Activated naive CD4-positive, alpha-beta T cell treated with anti-CD3 and anti-CD28 coated beads for 36 hours (primary cell): ENCODE measurements at regions of chr3 and their contacts with region 1.

Region 1: DNA sequence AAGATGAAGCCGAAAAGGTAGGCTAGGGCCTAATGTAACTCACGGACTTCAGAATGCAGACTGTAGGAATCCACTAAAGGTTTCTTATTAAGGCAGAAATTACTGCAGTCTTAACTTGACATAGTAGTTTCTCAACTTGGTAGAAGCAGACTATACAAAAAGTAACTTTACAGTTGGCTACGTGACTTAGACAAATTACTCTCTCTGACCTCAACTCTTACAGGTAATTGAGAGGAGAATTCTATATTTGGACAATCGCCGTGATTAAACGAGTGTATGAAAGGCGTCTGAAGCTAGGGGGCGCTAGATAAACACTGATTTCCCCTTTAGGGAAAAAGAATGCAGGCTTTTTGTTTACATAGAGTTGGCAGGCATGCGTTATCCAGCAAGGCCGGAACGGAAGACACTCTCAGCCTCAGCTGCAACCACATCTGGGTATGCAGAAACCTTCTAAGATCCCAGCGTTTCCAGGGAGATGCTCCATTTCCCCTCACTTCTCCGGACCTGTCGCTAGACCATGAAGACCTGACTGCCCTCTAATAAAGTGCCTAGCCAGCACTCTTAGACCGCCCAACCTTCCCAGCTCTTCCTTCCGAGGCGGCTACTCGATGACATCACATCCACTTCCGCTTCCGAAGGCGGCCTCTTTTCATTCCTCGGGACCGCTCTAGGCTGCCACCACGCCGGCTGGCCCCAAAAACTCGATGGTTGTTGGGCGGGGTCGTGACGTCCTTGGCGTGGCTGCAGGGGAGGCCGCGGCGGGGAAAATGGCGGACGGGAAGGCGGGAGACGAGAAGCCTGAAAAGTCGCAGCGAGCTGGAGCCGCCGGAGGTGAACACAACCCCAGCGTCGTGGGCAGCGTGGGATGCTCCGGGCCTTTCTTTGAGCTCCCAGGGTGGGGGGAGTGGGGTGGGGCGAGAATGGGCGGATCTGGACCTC is at the start of gene PCNP:
- DNase-seq: peak; percentile 100
- H3K4me3 Mint-ChIP-seq: peak within 1 kb of the TSS; percentile 95
- H3K27ac Mint-ChIP-seq: peak within 1 kb of the TSS; percentile 96
- H3K4me1 Mint-ChIP-seq: peaks cover 67% of the 10 kb centered on the region
- H3K27me3 Mint-ChIP-seq: no peaks in the 10 kb centered on the region
- total RNA-seq, gene PCNP: 261 to 267 TPM

Region 2: GRCh38 chr3:100334488-100335351 is 1239.0 kb before region 1 on chr3 and contains the start of gene NIT2:
- CTCF ChIA-PET with region 1: no interaction called
- intact Hi-C with region 1: loop called (anchors 10 kb)
- DNase-seq: peak; percentile 82
- H3K4me3 Mint-ChIP-seq: peak within 1 kb of the TSS; percentile 86
- H3K27ac Mint-ChIP-seq: peak within 1 kb of the TSS; percentile 86
- H3K4me1 Mint-ChIP-seq: peaks cover 26% of the 10 kb centered on the region
- H3K27me3 Mint-ChIP-seq: no peaks in the 10 kb centered on the region
- total RNA-seq, gene NIT2: 69.1 to 76.0 TPM

Region 3: DNA sequence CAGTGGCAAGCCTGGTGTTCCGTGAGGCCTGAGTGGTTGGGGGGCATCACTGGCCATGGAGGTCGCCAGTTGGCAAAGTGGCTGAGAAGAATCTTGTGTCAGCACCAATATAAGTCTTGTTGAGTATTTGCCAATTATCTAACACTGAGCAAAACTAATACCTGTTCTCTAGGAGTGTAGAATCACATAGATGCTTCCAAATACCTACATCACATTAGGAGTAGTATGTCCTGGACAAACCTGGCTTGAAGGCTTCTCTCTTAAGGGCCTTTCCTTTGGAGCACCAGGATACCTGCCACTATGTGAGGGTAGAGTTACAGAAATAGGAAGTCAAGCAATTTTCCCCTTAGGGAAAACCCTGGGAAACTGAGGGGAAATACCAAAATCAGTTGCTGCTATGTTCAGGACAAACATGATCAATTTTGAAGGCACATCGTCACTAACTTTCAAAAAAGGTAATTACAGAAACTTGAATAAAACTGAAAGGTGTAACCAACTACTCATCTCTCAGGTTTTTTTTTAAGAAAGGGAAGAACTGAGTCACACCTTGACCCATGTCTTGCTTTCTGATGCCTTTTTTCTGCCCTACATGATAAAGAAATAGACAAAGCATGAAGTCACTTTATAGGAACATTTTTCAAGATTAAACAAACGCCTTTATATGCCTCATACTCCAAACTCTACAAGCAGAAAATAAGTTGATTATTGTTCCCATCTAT is 353.7 kb before region 1 on chr3:
- CTCF ChIA-PET with region 1: no interaction called
- intact Hi-C with region 1: loop called (anchors 1 kb)
- DNase-seq: peak; percentile 8
- H3K4me3 Mint-ChIP-seq: no peak overlapping the region
- H3K27ac Mint-ChIP-seq: peak overlapping the region; percentile 61
- H3K4me1 Mint-ChIP-seq: peaks cover 16% of the 10 kb centered on the region
- H3K27me3 Mint-ChIP-seq: no peaks in the 10 kb centered on the region

Region 4: DNA sequence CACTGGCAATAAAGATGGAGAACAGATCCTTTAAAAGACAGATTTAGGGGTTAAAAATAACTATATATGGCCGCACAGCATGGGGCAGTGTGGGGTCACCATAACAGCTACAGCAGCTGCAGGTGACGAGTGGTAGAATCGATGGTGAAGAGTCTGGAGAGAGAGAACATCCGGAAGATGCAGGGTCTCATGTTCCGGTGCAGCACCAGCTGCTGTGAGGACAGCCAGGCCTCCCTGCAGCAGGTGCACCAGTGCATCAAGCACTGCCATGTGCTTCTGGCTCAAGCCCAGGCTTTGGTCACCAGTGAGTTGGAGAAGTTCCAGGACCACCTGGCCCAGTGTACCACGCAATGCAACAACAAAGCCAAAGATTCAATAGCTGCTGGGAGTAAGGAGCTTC is 159.6 kb before region 1 on chr3:
- CTCF ChIA-PET with region 1: no interaction called
- intact Hi-C with region 1: no loop called
- DNase-seq: no peak
- H3K4me3 Mint-ChIP-seq: no peak overlapping the region
- H3K27ac Mint-ChIP-seq: no peak overlapping the region
- H3K4me1 Mint-ChIP-seq: peaks cover 34% of the 10 kb centered on the region
- H3K27me3 Mint-ChIP-seq: no peaks in the 10 kb centered on the region

Region 5: DNA sequence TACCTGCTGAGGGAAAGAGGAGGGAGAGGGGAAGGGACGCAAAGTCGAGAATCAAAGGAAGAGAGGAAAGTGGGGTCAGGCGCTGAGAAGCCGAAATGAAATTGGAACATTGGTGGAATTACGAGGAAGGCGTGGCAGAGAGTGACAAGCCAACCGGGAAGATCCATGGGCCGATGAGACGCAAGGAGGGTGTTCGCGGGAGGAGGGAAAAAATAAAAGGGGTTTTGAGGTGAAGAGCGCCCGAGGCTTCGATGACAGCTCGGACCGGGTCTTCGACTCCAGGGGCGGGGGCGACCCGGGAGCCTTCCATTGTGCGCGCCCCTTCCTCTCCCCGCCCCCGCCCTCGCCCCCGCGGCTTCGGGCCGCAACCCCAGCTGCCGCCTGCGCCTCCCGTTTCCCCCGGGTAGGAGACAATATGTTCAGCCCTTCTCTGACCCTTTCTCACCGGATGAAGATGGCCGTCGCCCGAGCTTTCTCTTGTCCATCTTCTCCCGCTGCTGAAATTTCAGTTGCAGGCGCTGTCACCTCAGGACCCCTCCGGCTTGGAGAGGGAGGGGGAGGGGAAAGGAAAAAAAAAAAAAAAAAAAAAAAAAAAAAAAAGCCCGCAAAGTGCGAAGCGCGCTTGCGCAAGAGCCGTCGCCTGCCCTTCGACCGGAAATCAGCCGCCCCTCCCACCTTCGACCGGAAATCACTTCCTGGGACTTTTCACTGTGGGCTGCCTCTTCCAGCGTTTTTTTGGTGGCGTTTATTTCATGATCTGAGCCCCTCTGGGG is 60.9 kb before region 1 on chr3 and contains the start of gene SENP7:
- CTCF ChIA-PET with region 1: interaction called, 3 read pairs
- intact Hi-C with region 1: loop called (anchors 1 kb)
- DNase-seq: peak; percentile 89
- H3K4me3 Mint-ChIP-seq: peak within 1 kb of the TSS; percentile 97
- H3K27ac Mint-ChIP-seq: peak within 1 kb of the TSS; percentile 97
- H3K4me1 Mint-ChIP-seq: peaks cover 50% of the 10 kb centered on the region
- H3K27me3 Mint-ChIP-seq: no peaks in the 10 kb centered on the region
- total RNA-seq, gene SENP7: 16.1 to 16.8 TPM

Region 6: GRCh38 chr3:101561630-101562328 is 11.9 kb before region 1 on chr3 and contains the start of gene TRMT10C:
- CTCF ChIA-PET with region 1: interaction called, 3 read pairs
- intact Hi-C with region 1: loop called (anchors 1 kb)
- DNase-seq: peak; percentile 96
- H3K4me3 Mint-ChIP-seq: peak within 1 kb of the TSS; percentile 97
- H3K27ac Mint-ChIP-seq: peak within 1 kb of the TSS; percentile 94
- H3K4me1 Mint-ChIP-seq: peaks cover 40% of the 10 kb centered on the region
- H3K27me3 Mint-ChIP-seq: no peaks in the 10 kb centered on the region
- total RNA-seq, gene TRMT10C: 24.0 to 24.4 TPM

Region 7: GRCh38 chr3:101602731-101603130 is 29.0 kb after region 1 on chr3:
- CTCF ChIA-PET with region 1: no interaction called
- intact Hi-C with region 1: no loop called
- DNase-seq: no peak
- H3K4me3 Mint-ChIP-seq: no peak overlapping the region
- H3K27ac Mint-ChIP-seq: no peak overlapping the region
- H3K4me1 Mint-ChIP-seq: peaks cover 2% of the 10 kb centered on the region
- H3K27me3 Mint-ChIP-seq: no peaks in the 10 kb centered on the region

Region 8: DNA sequence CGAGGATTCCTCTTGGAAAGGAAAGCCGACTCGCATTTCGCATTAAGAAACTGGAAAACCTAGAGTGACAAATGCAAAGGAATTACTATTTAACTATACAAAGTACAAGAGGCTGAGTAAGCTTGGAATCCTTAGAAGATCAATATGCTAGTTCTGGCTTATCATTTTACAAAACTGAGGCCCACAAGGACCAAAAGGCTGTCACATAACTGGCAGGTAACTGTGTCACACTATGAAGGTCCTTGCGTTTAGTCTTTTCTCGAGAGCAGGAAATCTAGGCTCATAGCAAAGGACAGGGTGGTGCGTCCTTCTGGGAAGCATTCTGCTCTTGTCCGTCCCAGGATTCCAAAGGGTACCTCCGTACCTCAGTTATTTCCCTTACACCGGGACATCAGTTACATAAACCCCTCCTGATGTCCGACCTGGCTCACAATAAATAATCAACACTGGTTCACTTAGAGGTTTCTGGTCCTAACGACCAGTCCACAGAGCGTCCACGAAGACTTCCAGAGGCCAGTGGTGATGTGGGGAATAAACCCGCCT is 112.2 kb after region 1 on chr3:
- CTCF ChIA-PET with region 1: interaction called, 4 read pairs
- intact Hi-C with region 1: loop called (anchors 1 kb)
- DNase-seq: no peak
- H3K4me3 Mint-ChIP-seq: peak overlapping the region; percentile 98
- H3K27ac Mint-ChIP-seq: peak overlapping the region; percentile 99
- H3K4me1 Mint-ChIP-seq: peaks cover 54% of the 10 kb centered on the region
- H3K27me3 Mint-ChIP-seq: no peaks in the 10 kb centered on the region

Region 9: DNA sequence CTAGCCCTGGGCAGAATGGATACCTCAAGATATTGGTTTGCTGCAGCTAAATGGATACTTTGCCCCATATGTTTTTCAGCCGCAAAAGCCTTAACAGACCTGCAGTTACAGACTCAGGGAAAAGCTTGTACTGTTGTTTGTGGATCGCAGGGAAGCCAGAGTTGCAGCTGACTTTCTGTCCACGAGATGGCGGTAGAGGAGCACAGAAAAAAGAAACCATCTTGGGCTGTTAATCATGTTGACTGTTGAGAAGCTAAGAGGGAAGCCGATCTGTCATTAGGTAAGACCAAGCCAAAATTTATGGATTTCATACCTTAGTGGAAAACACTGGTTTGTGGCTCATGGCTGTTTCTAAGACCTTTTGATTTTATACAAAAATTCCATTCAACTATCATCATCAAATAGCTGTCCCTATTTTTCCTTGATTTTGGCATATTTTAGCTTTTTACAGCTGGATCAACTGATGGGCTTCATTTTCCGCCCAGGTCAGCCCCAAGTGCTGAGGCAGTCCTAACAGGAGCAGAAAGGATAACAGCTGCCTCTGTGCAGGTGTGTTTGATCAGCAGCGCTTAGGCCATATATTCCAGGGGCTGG is 655.4 kb after region 1 on chr3:
- CTCF ChIA-PET with region 1: no interaction called
- intact Hi-C with region 1: loop called (anchors 2 kb)
- DNase-seq: peak; percentile 88
- H3K4me3 Mint-ChIP-seq: no peak overlapping the region
- H3K27ac Mint-ChIP-seq: no peak overlapping the region
- H3K4me1 Mint-ChIP-seq: peaks cover 16% of the 10 kb centered on the region
- H3K27me3 Mint-ChIP-seq: no peaks in the 10 kb centered on the region